ENCODE measurements at regions of chr9 and their contacts with region 1.

Region 1: DNA sequence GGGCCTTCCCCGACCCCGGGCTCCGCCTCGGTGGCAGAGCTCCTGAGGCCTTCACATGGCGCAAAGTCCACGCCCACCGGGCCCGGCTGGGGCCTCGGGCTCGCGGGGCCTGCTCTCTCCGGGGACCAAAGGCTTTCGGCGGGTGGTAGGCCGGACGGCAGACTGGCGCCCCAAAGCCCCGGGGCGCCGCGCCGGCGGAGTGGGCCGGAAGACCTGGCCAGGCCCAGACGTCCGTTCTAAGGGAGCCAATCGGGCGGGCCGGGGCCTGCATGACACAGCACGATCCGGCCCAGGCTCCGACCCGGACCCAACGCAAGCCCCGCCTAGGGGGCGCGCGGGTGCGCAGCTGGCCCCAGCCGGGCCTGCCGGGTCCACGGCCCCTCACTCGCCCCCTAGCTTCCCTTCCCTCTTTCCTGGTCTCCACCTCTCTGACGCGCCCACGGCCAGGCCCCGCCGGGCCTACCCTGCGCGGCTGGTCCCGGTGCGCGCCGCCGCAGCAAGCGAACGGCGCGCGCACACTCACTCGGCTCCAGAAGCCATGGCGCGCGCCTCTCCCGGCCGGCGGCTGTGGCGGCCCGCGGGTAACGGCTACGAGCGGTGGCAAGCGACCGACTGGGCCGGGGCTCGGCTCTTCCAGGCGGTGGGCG is 488 bp downstream of the VCP start:
- DNase-seq: peak; percentile 77 to 92
- ATAC-seq: peak; percentile 81 to 87
- H3K4me3 ChIP-seq: peak overlapping the region; percentile 92
- H3K27ac ChIP-seq: peak overlapping the region; percentile 97 to 98
- H3K4me1 ChIP-seq: peaks cover 28% of the 10 kb centered on the region
- CTCF ChIP-seq: peak; percentile 59
- EP300 ChIP-seq: no peak
- POLR2A ChIP-seq: no peak; the same call in 1 of the 2 replicates
- RAD21 ChIP-seq: no peak

Region 2: DNA sequence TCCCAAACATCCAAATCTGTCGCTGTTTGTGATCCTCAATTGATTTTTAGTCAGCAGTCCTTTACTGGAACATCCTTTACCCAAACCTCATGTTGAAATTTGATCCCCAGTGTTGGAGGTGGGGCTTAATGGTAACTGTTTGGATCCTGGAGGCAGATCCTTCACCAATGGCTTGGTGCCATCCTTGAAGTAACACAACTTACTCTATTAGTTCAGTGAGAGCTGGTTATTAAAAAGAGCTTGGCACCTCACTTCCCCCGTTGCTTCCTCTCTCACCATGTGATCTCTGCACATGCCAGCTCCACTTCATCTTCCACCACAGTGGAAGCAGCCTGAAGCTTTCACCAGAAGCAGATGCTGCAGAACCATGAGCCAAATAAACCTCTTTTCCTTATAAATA is 42.1 kb before region 1 on chr9:
- CTCF ChIA-PET with region 1: interaction called, 3 read pairs
- POLR2A ChIA-PET with region 1: interaction called, 16 read pairs
- DNase-seq: no peak
- ATAC-seq: no peak
- H3K4me3 ChIP-seq: no peak overlapping the region
- H3K27ac ChIP-seq: no peak overlapping the region
- H3K4me1 ChIP-seq: peaks cover 22% of the 10 kb centered on the region
- CTCF ChIP-seq: no peak
- EP300 ChIP-seq: no peak
- POLR2A ChIP-seq: no peak
- RAD21 ChIP-seq: no peak

Region 3: DNA sequence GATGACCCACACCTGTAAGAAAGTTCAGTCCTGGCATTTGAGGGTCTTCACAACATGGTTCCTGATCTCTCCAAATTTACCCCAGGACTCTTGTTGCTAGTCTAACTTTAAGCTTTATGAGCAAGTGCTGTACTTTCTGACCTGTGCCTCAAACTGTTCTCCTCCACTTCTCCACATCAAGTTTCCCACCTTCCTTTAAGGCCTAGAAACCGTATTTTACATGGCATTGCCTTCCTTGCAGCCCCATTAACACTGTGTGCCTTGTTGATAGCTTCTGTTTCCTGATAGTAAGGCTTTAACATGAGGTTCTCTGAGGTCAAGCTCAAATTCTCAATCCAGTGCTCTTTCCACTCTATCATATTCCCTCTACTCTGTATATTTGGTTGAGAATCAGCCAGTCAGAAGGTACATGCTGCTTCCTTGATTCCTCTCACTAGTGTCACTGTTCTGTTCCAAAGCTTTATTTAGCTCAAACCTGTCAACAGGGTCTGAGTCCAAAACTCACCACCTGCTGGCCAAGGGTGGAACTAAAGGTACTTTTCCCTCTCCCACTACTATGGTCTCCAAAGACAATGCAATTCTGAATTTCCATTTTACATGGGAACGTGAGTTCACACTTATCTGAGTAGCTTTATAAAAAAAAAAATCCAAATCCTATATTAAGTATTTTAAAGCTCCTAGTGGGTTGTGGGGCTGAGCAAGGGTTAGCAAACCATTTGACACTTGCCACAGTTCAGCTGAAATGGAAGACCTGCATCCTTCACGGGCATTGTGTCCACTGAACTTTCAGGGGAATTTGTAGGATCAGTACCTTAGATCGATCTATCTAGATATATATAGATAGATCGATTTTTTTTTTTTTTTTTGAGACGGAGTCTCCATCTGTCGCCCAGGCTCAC is 20.6 kb before region 1 on chr9:
- CTCF ChIA-PET with region 1: interaction called, 18 read pairs
- POLR2A ChIA-PET with region 1: interaction called, 26 read pairs
- DNase-seq: peak; percentile 46 to 52
- ATAC-seq: peak; percentile 78 to 86
- H3K4me3 ChIP-seq: no peak overlapping the region
- H3K27ac ChIP-seq: no peak overlapping the region
- H3K4me1 ChIP-seq: no peaks in the 10 kb centered on the region
- CTCF ChIP-seq: peak; percentile 52; the same call in 1 of the 3 replicates
- EP300 ChIP-seq: no peak
- POLR2A ChIP-seq: no peak
- RAD21 ChIP-seq: peak in 1 of 2 experiments; percentile 33; a peak in 3 of 5 replicates

Region 4: GRCh38 chr9:35056571-35057270 is 15.2 kb before region 1 on chr9:
- CTCF ChIA-PET with region 1: interaction called, 18 read pairs
- POLR2A ChIA-PET with region 1: interaction called, 26 read pairs
- DNase-seq: no peak
- ATAC-seq: peak in 1 of 2 experiments; percentile 43; a peak in 4 of 6 replicates
- H3K4me3 ChIP-seq: no peak overlapping the region
- H3K27ac ChIP-seq: no peak overlapping the region
- H3K4me1 ChIP-seq: no peaks in the 10 kb centered on the region
- CTCF ChIP-seq: no peak
- EP300 ChIP-seq: no peak
- POLR2A ChIP-seq: no peak
- RAD21 ChIP-seq: no peak

Region 5: GRCh38 chr9:35096035-35096849 is 24.3 kb after region 1 on chr9 and contains the start of gene PIGO:
- CTCF ChIA-PET with region 1: interaction called, 99 read pairs
- POLR2A ChIA-PET with region 1: interaction called, 9 read pairs
- DNase-seq: peak; percentile 89 to 94
- ATAC-seq: peak; percentile 95 to 96
- H3K4me3 ChIP-seq: peak within 1 kb of the TSS; percentile 66
- H3K27ac ChIP-seq: peak within 1 kb of the TSS; percentile 94
- H3K4me1 ChIP-seq: peaks cover 12% of the 10 kb centered on the region
- CTCF ChIP-seq: peak; percentile 82
- EP300 ChIP-seq: no peak
- POLR2A ChIP-seq: peak; percentile 71
- RAD21 ChIP-seq: peak; percentile 49 to 58
- polyA plus RNA-seq, gene PIGO: 50.4 and 60.0 TPM in 2 replicates

Region 6: DNA sequence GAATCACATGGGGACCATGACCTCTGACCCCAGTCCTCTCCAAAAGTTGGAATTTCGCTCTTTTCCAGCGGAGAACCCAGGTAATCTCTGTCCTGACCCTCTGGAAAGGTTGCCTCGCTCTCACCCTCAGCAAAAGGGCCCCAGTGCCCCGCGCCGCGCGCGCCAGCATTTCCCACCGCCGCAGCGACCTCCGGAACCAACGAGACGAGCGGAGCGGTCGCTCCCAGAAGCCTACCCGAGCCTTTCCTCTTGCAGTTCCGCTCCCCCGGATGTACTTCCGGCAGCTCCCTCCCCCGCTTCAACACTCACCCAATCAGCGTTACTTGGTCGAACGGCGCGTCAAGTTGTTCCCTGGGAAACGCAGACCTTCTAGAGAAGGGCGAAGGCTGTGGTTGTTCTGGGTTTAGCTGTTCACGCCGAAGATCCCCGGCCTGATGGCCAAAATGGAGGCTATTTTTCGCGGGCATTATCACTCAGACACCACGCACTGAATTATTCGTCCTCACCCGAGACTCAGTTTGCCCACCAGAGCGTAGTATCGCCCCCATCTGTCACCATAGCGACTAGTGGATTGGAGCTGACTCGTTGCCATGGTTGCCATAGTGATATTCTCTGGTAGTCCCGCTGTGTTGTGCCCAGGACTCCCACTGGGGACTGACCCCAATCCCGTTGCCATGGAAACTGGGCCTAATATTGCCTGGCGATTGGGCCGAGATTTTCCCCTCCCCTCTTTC is 31.2 kb after region 1 on chr9 and contains the start of gene STOML2:
- CTCF ChIA-PET with region 1: interaction called, 99 read pairs
- POLR2A ChIA-PET with region 1: interaction called, 14 read pairs
- DNase-seq: peak; percentile 97 to 98
- ATAC-seq: peak; percentile 97 to 98
- H3K4me3 ChIP-seq: peak within 1 kb of the TSS; percentile 70
- H3K27ac ChIP-seq: peak within 1 kb of the TSS; percentile 88 to 91
- H3K4me1 ChIP-seq: peaks cover 14% of the 10 kb centered on the region
- CTCF ChIP-seq: no peak
- EP300 ChIP-seq: no peak
- POLR2A ChIP-seq: peak; percentile 66
- RAD21 ChIP-seq: no peak
- polyA plus RNA-seq, gene STOML2: 196 and 230 TPM in 2 replicates

Region 7: GRCh38 chr9:35111001-35111933 is 39.3 kb after region 1 on chr9:
- CTCF ChIA-PET with region 1: interaction called, 6 read pairs
- POLR2A ChIA-PET with region 1: interaction called, 14 read pairs
- DNase-seq: peak; percentile 96 to 99
- ATAC-seq: peak; percentile 58 to 80
- H3K4me3 ChIP-seq: peak overlapping the region; percentile 68
- H3K27ac ChIP-seq: peak overlapping the region; percentile 80 to 91
- H3K4me1 ChIP-seq: peaks cover 47% of the 10 kb centered on the region
- CTCF ChIP-seq: no peak
- EP300 ChIP-seq: no peak
- POLR2A ChIP-seq: peak; percentile 66
- RAD21 ChIP-seq: no peak